B cell (primary cell): ENCODE measurements at regions of chr6 and their contacts with region 1.

Region 1: DNA sequence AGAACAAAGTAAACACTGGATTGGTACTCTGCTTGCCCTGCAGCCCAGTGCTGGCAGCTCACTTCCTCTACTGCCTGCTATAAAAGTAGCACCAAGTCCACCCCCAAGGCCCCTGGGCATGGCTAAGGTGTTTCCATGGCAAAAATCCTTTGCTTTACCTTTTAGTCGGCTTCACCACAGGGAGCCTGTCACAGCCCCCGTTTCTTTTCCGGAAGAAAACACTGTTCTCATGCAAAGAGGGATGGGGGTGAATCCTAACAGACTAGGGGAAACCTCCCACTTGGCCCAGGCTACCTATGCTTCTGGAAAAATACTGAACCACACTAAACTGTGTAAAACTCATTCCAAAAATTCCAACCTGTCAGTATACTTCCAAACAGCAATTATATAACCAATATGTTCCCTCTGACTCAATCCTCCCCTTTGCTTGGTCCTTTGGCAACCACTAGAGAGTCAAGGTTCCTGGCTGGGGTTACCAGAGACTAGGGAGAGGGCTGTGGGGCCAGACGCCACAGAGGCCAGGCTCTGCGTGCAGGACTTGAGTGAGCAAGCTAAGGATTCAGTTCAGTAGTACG is 16.1 kb downstream of the PPIL1 start:
- DNase-seq: no peak
- ATAC-seq: no peak
- H3K4me3 ChIP-seq: no peak overlapping the region
- H3K4me3 Mint-ChIP-seq: no peak overlapping the region
- H3K27ac ChIP-seq: no peak overlapping the region
- H3K27ac Mint-ChIP-seq: no peak overlapping the region
- H3K4me1 ChIP-seq: no peaks in the 10 kb centered on the region
- H3K4me1 Mint-ChIP-seq: no peaks in the 10 kb centered on the region
- H3K27me3 ChIP-seq: no peaks in the 10 kb centered on the region
- H3K27me3 Mint-ChIP-seq: no peaks in the 10 kb centered on the region
- CTCF ChIP-seq: no peak

Region 2: DNA sequence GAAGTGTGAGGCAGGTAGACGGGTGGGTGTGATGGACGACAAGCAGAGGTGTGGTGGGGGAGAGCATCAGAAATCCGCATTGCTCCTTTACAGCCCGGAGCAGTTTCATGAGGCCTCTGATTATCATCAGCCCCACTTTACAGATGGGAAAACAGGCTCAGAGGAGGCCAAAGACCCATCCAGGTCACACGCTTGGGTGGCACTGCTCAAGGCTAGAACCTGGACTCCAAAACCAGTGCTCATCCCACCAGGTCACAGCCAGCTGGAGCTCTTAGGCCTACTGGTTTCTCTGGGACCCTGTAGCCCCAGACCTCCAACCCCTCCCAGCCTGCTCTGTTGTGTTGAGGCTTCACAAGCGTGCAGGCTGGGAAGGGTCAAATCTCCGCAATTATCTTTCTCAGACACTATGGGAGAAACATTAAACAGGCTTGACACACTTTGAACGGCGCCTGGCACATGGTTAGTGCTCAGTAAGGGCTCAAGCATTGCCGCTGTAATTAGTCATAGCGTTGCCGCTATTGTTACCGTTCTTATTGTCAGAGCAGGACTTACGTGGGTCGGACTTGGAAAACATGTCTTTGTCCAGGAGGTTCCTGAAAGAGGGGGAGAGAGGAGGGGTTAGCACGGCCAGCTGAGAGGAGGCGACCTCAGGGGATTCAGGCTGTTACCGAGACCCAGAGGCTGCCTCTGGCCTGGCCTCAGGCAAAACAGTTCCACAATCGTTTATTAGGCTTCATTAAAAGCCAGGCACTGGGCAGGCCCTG is 35.8 kb before region 1 on chr6:
- CTCF ChIA-PET with region 1: no interaction called
- POLR2A ChIA-PET with region 1: interaction called, 15 read pairs
- intact Hi-C with region 1: no loop called
- DNase-seq: no peak
- ATAC-seq: no peak
- H3K4me3 ChIP-seq: no peak overlapping the region
- H3K4me3 Mint-ChIP-seq: no peak overlapping the region
- H3K27ac ChIP-seq: no peak overlapping the region
- H3K27ac Mint-ChIP-seq: no peak overlapping the region
- H3K4me1 ChIP-seq: peaks cover 0 to 3% of the 10 kb centered on the region in 2 donors
- H3K4me1 Mint-ChIP-seq: peaks cover 3% of the 10 kb centered on the region
- H3K27me3 ChIP-seq: peaks cover 0 to 19% (median 3%) of the 10 kb centered on the region in 4 experiments
- H3K27me3 Mint-ChIP-seq: peaks cover 27% of the 10 kb centered on the region
- CTCF ChIP-seq: no peak

Region 3: GRCh38 chr6:37396476-37397180 is 538.1 kb after region 1 on chr6:
- CTCF ChIA-PET with region 1: no interaction called
- POLR2A ChIA-PET with region 1: no interaction called
- intact Hi-C with region 1: no loop called
- DNase-seq: no peak
- ATAC-seq: no peak
- H3K4me3 ChIP-seq: no peak overlapping the region
- H3K4me3 Mint-ChIP-seq: no peak overlapping the region
- H3K27ac ChIP-seq: no peak overlapping the region
- H3K27ac Mint-ChIP-seq: no peak overlapping the region
- H3K4me1 ChIP-seq: no peaks in the 10 kb centered on the region
- H3K4me1 Mint-ChIP-seq: no peaks in the 10 kb centered on the region
- H3K27me3 ChIP-seq: no peaks in the 10 kb centered on the region
- H3K27me3 Mint-ChIP-seq: no peaks in the 10 kb centered on the region
- CTCF ChIP-seq: no peak